Activated CD4-positive, alpha-beta memory T cell treated with anti-CD3 and anti-CD28 coated beads, Interleukin-2, amount 10 ng/mL, durations not matched to agents 7 days and 5 days (primary cell): ENCODE measurements at regions of chr1 and their contacts with region 1.

Region 1: DNA sequence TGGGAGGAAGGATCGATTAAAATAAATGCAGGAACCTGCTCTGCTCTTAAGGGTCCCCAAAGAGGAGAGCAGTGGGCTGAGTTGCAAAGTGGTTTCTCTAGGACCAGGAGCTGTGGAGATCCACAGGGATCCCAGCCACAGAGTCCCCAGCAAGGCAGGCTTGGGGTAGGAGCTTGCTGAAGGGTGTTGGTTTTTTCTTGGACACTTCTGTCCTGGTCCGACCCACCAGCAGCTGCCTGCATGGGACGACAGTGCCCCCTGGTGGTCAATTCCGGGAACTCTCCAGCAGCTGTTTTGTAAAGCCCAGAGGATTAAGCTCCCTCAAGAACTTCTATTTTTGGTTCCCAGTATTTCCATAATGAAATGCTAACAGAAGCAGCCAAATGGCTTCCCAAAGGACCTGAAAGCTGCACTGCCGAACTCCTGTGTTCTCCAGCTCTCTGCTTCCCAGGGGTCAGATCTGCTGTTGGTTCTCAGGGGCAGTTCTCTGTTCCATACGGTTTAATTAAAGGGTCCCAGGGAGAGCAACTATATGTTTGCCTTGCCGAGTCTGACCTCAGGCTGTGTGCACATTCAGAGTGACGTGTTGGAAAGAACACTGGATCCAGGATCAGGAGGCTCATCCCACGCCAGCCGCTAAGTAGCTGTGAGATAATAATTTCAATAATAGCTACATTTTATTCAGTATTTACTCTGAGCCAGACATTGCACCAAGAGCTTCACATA is 23.2 kb downstream of the NENF start:
- DNase-seq: peak; percentile 85
- H3K4me3 Mint-ChIP-seq: no peak overlapping the region
- H3K27ac Mint-ChIP-seq: no peak overlapping the region
- H3K4me1 Mint-ChIP-seq: peaks cover 4% of the 10 kb centered on the region
- H3K27me3 Mint-ChIP-seq: no peaks in the 10 kb centered on the region

Region 2: GRCh38 chr1:212035123-212035834 is 420.7 kb before region 1 on chr1 and contains the starts of genes DTL and INTS7:
- CTCF ChIA-PET with region 1: interaction called, 28 read pairs
- POLR2A ChIA-PET with region 1: interaction called, 10 read pairs
- DNase-seq: peak; percentile 99
- H3K4me3 Mint-ChIP-seq: peak within 1 kb of the TSS; percentile 98
- H3K27ac Mint-ChIP-seq: peak within 1 kb of the TSS; percentile 85
- H3K4me1 Mint-ChIP-seq: peaks cover 64% of the 10 kb centered on the region
- H3K27me3 Mint-ChIP-seq: no peaks in the 10 kb centered on the region
- total RNA-seq, gene DTL: 59.6 to 60.7 TPM
- total RNA-seq, gene INTS7: 28.4 to 28.8 TPM

Region 3: GRCh38 chr1:212368073-212368484 is 87.9 kb before region 1 on chr1:
- CTCF ChIA-PET with region 1: interaction called, 32 read pairs
- POLR2A ChIA-PET with region 1: no interaction called
- DNase-seq: peak; percentile 65
- H3K4me3 Mint-ChIP-seq: no peak overlapping the region
- H3K27ac Mint-ChIP-seq: no peak overlapping the region
- H3K4me1 Mint-ChIP-seq: peaks cover 2% of the 10 kb centered on the region
- H3K27me3 Mint-ChIP-seq: no peaks in the 10 kb centered on the region

Region 4: DNA sequence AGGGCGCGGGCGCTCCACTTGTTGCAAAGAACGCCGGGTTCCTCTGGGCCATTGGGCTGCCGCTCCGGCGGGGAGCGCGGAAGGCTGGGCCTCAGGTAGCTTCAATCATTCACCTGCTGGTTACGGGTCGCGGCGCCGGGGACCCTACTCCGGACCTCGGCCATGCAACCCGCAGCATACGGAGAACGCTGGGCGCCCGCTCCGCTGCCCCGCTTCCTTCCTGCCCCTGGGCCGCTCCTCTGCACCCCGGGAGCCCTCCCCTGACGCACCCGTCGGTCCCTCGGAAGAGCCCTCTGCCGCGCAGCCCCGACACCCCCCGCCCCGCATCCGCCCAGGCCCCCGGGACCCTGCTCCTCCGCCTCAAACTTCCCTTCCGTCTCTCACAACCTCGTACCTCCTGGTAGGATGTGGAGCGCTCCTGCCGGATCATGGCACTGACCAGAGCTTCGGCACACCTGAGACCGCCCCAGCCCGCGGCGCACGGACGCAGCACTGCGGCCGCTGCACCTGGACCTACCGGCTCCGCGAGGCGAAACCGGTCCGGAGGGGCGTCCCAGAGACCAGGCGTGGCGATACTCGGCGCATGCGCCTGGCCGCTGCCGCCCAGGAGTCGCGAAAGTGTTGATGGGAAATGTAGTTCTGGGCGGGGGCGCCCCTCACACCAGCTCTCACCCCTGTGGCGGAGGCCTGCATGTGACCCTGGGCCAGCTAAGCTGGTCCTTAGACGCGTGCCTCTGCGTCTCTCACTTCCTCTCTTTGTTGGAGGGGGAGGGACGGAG is 41.4 kb before region 1 on chr1 and contains the start of gene PACC1:
- CTCF ChIA-PET with region 1: interaction called, 11 read pairs
- POLR2A ChIA-PET with region 1: no interaction called
- DNase-seq: peak; percentile 91
- H3K4me3 Mint-ChIP-seq: peak within 1 kb of the TSS; percentile 98
- H3K27ac Mint-ChIP-seq: peak within 1 kb of the TSS; percentile 83
- H3K4me1 Mint-ChIP-seq: peaks cover 26% of the 10 kb centered on the region
- H3K27me3 Mint-ChIP-seq: no peaks in the 10 kb centered on the region
- total RNA-seq, gene PACC1: 11.4 to 12.1 TPM

Region 5: GRCh38 chr1:212477014-212477679 is 21.2 kb after region 1 on chr1:
- CTCF ChIA-PET with region 1: interaction called, 46 read pairs
- POLR2A ChIA-PET with region 1: no interaction called
- DNase-seq: peak; percentile 79
- H3K4me3 Mint-ChIP-seq: no peak overlapping the region
- H3K27ac Mint-ChIP-seq: no peak overlapping the region
- H3K4me1 Mint-ChIP-seq: peaks cover 19% of the 10 kb centered on the region
- H3K27me3 Mint-ChIP-seq: peaks cover 19% of the 10 kb centered on the region

Region 6: DNA sequence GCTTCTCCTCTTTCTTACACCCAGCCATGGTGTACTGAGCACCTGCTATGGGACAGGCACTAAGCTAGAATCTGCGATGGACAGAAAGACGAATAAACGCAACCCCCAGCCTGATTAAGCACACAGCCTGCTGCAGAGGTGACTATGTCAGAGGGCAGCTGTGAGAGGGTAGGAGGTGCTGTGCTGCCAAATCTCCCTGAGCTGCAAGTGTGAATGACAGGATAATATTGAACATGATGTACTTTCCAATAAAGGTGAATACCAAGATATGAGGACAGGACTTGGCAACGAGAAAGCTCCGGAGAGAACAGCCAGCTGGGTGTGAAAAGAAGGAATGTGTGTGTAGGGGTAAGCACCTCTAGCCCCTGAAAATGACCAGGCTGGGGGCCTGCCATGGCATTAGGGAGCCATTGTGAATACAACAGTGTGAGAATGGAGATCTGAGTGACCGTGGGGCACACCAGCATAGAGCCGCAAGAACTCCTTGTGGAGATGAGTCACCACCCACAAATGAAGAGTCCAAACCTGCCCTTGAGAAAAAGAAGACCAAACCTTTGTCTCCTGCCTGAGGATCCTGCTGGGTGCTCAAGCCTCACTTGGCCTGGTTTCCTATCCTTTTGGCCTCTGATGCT is 69.6 kb after region 1 on chr1:
- CTCF ChIA-PET with region 1: no interaction called
- POLR2A ChIA-PET with region 1: no interaction called
- DNase-seq: no peak
- H3K4me3 Mint-ChIP-seq: no peak overlapping the region
- H3K27ac Mint-ChIP-seq: no peak overlapping the region
- H3K4me1 Mint-ChIP-seq: no peaks in the 10 kb centered on the region
- H3K27me3 Mint-ChIP-seq: peaks cover 31% of the 10 kb centered on the region

Region 7: GRCh38 chr1:212782422-212783154 is 326.6 kb after region 1 on chr1:
- CTCF ChIA-PET with region 1: interaction called, 14 read pairs
- POLR2A ChIA-PET with region 1: no interaction called
- DNase-seq: no peak
- H3K4me3 Mint-ChIP-seq: no peak overlapping the region
- H3K27ac Mint-ChIP-seq: no peak overlapping the region
- H3K4me1 Mint-ChIP-seq: peaks cover 20% of the 10 kb centered on the region
- H3K27me3 Mint-ChIP-seq: no peaks in the 10 kb centered on the region